ENCODE measurements at regions of chr11 and their contacts with region 1.

Region 1: DNA sequence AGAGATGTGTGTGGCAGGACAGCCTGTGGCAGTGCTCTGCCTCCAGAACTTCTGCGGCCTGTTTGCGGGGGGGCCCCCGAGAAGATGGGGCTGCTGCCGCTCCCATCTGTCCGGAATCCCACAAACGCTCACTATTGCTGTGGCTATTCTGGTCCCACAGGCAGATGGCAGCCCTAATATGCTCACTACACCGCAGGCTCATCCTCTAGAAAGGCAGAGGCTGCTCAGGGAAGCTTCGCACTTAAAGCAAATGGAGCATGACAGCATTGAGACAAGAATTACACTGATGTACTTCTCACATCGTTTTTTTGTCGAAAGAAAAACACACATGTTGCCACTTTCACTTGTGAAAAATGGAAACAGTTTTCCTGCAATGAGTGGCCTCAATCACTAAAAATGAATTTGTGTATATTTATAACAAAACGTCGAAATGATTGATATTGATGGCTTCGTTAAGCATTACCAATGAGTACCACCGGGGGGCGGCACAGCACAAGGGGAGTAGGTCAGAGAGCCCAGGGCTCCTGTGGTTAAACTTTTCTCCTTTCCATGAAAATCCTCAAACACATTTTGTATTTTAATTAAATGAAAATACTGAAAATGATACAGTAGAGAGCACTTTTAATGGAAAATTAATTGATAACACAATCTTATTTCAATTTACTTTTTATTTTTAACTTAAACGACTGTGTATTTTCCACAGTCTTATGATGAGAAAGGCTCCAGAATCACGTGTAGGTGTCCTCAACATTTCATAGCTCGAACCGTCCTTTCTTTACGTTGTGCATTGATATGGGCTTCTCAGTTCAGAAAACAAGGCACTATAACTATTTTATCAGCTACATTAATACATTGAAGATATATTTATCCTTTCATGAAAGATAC is 69.1 kb downstream of the CTTN start:
- DNase-seq: peak in 1 of 2 donors; percentile 43
- H3K4me3 ChIP-seq: no peak overlapping the region
- CTCF ChIP-seq: peak in 1 of 3 donors; percentile 32
- POLR2A ChIP-seq: no peak

Region 2: GRCh38 chr11:69382131-69383128 is 1085.0 kb before region 1 on chr11:
- intact Hi-C with region 1: no loop called
- DNase-seq: peak in 1 of 2 donors; percentile 86
- H3K4me3 ChIP-seq: no peak overlapping the region
- CTCF ChIP-seq: no peak
- POLR2A ChIP-seq: no peak

Region 3: GRCh38 chr11:69841859-69842698 is 625.4 kb before region 1 on chr11:
- intact Hi-C with region 1: no loop called
- DNase-seq: peak in 1 of 2 donors; percentile 63
- H3K4me3 ChIP-seq: no peak overlapping the region
- CTCF ChIP-seq: no peak
- POLR2A ChIP-seq: no peak

Region 4: GRCh38 chr11:70755410-70756161 is 288.1 kb after region 1 on chr11:
- intact Hi-C with region 1: loop called (anchors 2 kb)
- DNase-seq: peak; percentile 49 to 90
- H3K4me3 ChIP-seq: no peak overlapping the region
- CTCF ChIP-seq: peak in 1 of 3 donors; percentile 75
- POLR2A ChIP-seq: no peak

Measured in lower leg skin (tissue), 4 donors.